ENCODE measurements at regions of chr1 and their contacts with region 1.

Region 1: GRCh38 chr1:92749024-92749634 is 35.8 kb downstream of the EVI5 start:
- DNase-seq: no peak
- H3K4me3 ChIP-seq: no peak overlapping the region
- H3K27ac ChIP-seq: no peak overlapping the region
- H3K4me1 ChIP-seq: peaks cover 0 to 9% (median 8%) of the 10 kb centered on the region in 4 donors
- H3K27me3 ChIP-seq: no peaks in the 10 kb centered on the region
- CTCF ChIP-seq: peak in 3 of 4 experiments; percentile 27 to 52 (median 42)
- EP300 ChIP-seq: no peak
- POLR2A ChIP-seq: no peak

Region 2: DNA sequence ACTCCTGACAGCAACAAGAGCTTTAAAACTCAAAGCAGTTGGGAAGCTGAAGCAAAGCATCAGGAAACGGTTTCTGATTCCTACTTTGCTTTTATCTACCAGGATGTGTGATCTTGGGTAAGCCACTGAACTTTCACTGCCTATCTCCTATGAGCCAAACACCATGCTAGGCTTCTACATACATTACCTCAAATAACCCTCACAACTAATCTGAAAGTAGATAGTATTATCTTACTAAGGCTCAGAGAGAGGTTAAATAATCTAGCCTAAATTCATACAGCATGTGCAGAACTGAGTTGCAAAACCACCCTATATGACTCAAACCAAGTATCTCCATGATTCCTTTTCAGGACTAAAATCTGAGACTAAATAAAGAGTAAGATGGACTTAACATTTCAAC is 48.0 kb before region 1 on chr1:
- intact Hi-C with region 1: no loop called
- DNase-seq: no peak
- H3K4me3 ChIP-seq: no peak overlapping the region
- H3K27ac ChIP-seq: no peak overlapping the region
- H3K4me1 ChIP-seq: no peaks in the 10 kb centered on the region
- H3K27me3 ChIP-seq: no peaks in the 10 kb centered on the region
- CTCF ChIP-seq: no peak
- EP300 ChIP-seq: no peak
- POLR2A ChIP-seq: no peak

Region 3: DNA sequence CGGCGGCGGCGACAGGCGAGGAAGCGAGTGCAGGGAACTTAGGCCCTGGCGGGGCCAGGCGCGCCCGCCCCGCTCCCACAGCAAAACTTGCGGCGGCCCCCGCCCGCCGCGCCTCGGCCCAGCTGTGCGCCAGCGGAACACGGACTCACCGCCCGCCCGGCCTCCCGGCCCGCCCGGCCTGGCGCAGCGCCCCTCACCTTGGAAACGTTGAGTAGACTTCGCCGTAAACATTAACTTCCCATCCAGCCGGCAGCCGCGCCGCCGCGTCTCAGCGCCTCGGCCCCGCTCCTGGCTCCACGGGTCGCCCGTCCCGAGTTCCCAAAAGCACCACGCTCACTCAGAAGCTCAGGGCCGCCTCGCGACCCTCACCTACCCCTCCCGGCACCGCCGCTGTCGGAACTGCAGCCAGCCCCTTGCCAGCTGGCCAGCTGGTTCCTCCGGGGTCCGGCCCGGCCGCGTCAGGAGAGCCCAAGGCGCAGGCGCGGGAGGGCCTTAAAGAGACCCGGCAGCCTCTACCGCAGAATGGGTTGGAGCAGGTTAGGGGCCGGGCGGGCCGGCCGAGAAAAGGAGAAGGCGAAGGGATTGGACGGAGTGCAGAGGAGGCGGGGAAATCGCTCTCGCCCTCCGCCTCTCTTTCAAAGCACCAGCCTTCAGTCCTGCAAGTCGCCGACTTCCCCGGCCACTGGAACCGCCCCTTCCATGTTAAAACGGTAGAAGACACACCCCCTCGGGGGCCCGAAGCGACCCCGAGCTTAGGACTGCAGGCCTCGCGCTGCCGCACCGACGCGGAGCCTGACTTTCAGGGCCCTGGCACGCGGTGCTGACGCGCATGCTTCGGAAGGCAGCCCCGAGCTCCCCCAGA is 35.7 kb after region 1 on chr1 and contains the start of gene EVI5:
- intact Hi-C with region 1: loop called (anchors 5 kb)
- DNase-seq: peak; percentile 97
- H3K4me3 ChIP-seq: peak within 1 kb of the TSS; percentile 63 to 84 (median 76)
- H3K27ac ChIP-seq: peak within 1 kb of the TSS; percentile 92 to 99 (median 98)
- H3K4me1 ChIP-seq: peaks cover 0 to 25% (median 14%) of the 10 kb centered on the region in 4 donors
- H3K27me3 ChIP-seq: no peaks in the 10 kb centered on the region
- CTCF ChIP-seq: peak in 2 of 4 experiments; percentile 19 to 35
- EP300 ChIP-seq: peak in 1 of 4 donors; percentile 6
- POLR2A ChIP-seq: peak; percentile 38 to 63
- total RNA-seq, gene EVI5: 39.9 to 53.5 (median 46.5) TPM

Region 4: GRCh38 chr1:92817986-92818764 is 69.0 kb after region 1 on chr1:
- intact Hi-C with region 1: loop called (anchors 5 kb)
- DNase-seq: no peak
- H3K4me3 ChIP-seq: no peak overlapping the region
- H3K27ac ChIP-seq: no peak overlapping the region
- H3K4me1 ChIP-seq: no peaks in the 10 kb centered on the region
- H3K27me3 ChIP-seq: no peaks in the 10 kb centered on the region
- CTCF ChIP-seq: peak; percentile 34 to 75 (median 60)
- EP300 ChIP-seq: no peak
- POLR2A ChIP-seq: no peak